Left cardiac atrium (tissue), 4 donors: ENCODE measurements at regions of chrX and their contacts with region 1.

Region 1: DNA sequence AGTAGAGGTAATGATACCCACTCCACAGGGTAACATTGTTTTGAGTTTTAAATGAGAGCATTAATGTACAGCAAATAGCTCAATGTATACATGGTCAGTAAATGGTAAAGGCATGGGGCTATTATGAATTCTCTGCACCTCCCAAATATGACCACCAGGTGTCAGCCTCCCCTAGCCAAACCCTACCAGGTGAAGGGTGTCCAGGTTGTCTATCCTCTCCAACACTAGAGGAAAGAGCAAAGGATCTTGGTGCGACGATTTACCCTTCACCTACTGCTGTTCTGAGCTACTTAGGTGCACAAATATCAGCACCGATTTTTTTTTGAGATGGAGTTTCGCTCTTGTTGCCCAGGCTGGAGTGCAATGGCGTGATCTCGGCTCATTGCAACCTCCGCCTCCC is 26.5 kb upstream of the XIAP start:
- DNase-seq: no peak
- ATAC-seq: peak; percentile 68 to 82

Region 2: GRCh38 chrX:123959281-123960041 is 126.1 kb after region 1 on chrX:
- intact Hi-C with region 1: loop called in 1 of 2 experiments (anchors 10 kb)
- DNase-seq: peak; percentile 56
- ATAC-seq: peak; percentile 14 to 27